Activated CD4-positive, alpha-beta T cell treated with anti-CD3 and anti-CD28 coated beads for 36 hours (primary cell): ENCODE measurements at regions of chr3 and their contacts with region 1.

Region 1: GRCh38 chr3:157532529-157533297 is 29.5 kb upstream of the VEPH1 start:
- DNase-seq: peak; percentile 16
- ATAC-seq: peak; percentile 61
- H3K4me3 Mint-ChIP-seq: no peak overlapping the region
- H3K27ac Mint-ChIP-seq: no peak overlapping the region
- H3K4me1 Mint-ChIP-seq: no peaks in the 10 kb centered on the region
- H3K27me3 Mint-ChIP-seq: no peaks in the 10 kb centered on the region

Region 2: GRCh38 chr3:157572559-157573270 is 40.0 kb after region 1 on chr3:
- CTCF ChIA-PET with region 1: interaction called, 114 read pairs
- POLR2A ChIA-PET with region 1: interaction called, 4 read pairs
- intact Hi-C with region 1: loop called (anchors 1 kb)
- DNase-seq: peak; percentile 37
- ATAC-seq: no peak
- H3K4me3 Mint-ChIP-seq: no peak overlapping the region
- H3K27ac Mint-ChIP-seq: no peak overlapping the region
- H3K4me1 Mint-ChIP-seq: no peaks in the 10 kb centered on the region
- H3K27me3 Mint-ChIP-seq: peaks cover 15% of the 10 kb centered on the region

Region 3: DNA sequence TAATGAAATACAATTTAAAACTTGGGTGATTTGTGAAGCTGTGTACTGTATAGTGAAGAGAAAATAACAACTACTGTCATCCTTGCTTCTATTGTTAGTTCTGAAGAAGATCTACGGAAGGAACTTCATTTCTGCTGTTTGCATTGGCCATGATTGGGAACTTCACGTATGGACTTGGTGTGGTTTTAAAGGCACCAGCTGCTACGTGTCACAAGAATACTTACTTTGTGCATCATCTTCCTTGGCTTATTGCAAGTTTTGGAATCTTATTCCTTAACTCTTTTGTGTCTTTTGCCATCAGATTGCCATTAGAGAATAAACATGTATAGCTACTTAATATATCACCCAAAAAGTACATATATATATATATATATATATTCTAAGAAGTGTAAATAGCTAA is 45.5 kb after region 1 on chr3:
- CTCF ChIA-PET with region 1: interaction called, 114 read pairs
- POLR2A ChIA-PET with region 1: no interaction called
- intact Hi-C with region 1: no loop called
- DNase-seq: no peak
- ATAC-seq: no peak
- H3K4me3 Mint-ChIP-seq: no peak overlapping the region
- H3K27ac Mint-ChIP-seq: no peak overlapping the region
- H3K4me1 Mint-ChIP-seq: no peaks in the 10 kb centered on the region
- H3K27me3 Mint-ChIP-seq: peaks cover 6% of the 10 kb centered on the region